CD8-positive, alpha-beta T cell (primary cell): ENCODE measurements at regions of chr21 and their contacts with region 1.

Region 1: GRCh38 chr21:37366482-37367316 is at the start of gene DYRK1A:
- DNase-seq: peak; percentile 97 to 100 (median 98)
- ATAC-seq: peak; percentile 81
- H3K4me3 ChIP-seq: peak within 1 kb of the TSS; percentile 73 to 86
- H3K4me3 Mint-ChIP-seq: peak within 1 kb of the TSS; percentile 100
- H3K27ac ChIP-seq: peak within 1 kb of the TSS; percentile 92 to 94
- H3K27ac Mint-ChIP-seq: peak within 1 kb of the TSS; percentile 100
- H3K4me1 ChIP-seq: peaks cover 36% of the 10 kb centered on the region
- H3K4me1 Mint-ChIP-seq: peaks cover 50% of the 10 kb centered on the region
- H3K27me3 ChIP-seq: no peaks in the 10 kb centered on the region
- H3K27me3 Mint-ChIP-seq: no peaks in the 10 kb centered on the region
- CTCF ChIP-seq: no peak
- total RNA-seq, gene DYRK1A: 171 to 195 TPM

Region 2: GRCh38 chr21:35547946-35548774 is 1818.5 kb before region 1 on chr21:
- CTCF ChIA-PET with region 1: no interaction called
- POLR2A ChIA-PET with region 1: no interaction called
- intact Hi-C with region 1: no loop called
- DNase-seq: no peak
- ATAC-seq: no peak
- H3K4me3 ChIP-seq: no peak overlapping the region
- H3K4me3 Mint-ChIP-seq: no peak overlapping the region
- H3K27ac ChIP-seq: no peak overlapping the region
- H3K27ac Mint-ChIP-seq: no peak overlapping the region
- H3K4me1 ChIP-seq: no peaks in the 10 kb centered on the region
- H3K4me1 Mint-ChIP-seq: no peaks in the 10 kb centered on the region
- H3K27me3 ChIP-seq: no peaks in the 10 kb centered on the region
- H3K27me3 Mint-ChIP-seq: peaks cover 11% of the 10 kb centered on the region
- CTCF ChIP-seq: no peak

Region 3: GRCh38 chr21:37072988-37073416 is 293.7 kb before region 1 on chr21 and contains the starts of genes PIGP and TTC3:
- CTCF ChIA-PET with region 1: no interaction called
- POLR2A ChIA-PET with region 1: interaction called, 3 read pairs
- intact Hi-C with region 1: loop called (anchors 5 kb)
- DNase-seq: peak; percentile 89 to 99 (median 95)
- ATAC-seq: peak; percentile 62
- H3K4me3 ChIP-seq: peak within 1 kb of the TSS; percentile 86 to 94
- H3K4me3 Mint-ChIP-seq: peak within 1 kb of the TSS; percentile 99
- H3K27ac ChIP-seq: peak within 1 kb of the TSS; percentile 96 to 98
- H3K27ac Mint-ChIP-seq: peak within 1 kb of the TSS; percentile 99
- H3K4me1 ChIP-seq: peaks cover 30% of the 10 kb centered on the region
- H3K4me1 Mint-ChIP-seq: peaks cover 57% of the 10 kb centered on the region
- H3K27me3 ChIP-seq: no peaks in the 10 kb centered on the region
- H3K27me3 Mint-ChIP-seq: no peaks in the 10 kb centered on the region
- CTCF ChIP-seq: no peak
- total RNA-seq, gene PIGP: 11.9 to 12.2 TPM
- total RNA-seq, gene TTC3: 137 to 141 TPM

Region 4: DNA sequence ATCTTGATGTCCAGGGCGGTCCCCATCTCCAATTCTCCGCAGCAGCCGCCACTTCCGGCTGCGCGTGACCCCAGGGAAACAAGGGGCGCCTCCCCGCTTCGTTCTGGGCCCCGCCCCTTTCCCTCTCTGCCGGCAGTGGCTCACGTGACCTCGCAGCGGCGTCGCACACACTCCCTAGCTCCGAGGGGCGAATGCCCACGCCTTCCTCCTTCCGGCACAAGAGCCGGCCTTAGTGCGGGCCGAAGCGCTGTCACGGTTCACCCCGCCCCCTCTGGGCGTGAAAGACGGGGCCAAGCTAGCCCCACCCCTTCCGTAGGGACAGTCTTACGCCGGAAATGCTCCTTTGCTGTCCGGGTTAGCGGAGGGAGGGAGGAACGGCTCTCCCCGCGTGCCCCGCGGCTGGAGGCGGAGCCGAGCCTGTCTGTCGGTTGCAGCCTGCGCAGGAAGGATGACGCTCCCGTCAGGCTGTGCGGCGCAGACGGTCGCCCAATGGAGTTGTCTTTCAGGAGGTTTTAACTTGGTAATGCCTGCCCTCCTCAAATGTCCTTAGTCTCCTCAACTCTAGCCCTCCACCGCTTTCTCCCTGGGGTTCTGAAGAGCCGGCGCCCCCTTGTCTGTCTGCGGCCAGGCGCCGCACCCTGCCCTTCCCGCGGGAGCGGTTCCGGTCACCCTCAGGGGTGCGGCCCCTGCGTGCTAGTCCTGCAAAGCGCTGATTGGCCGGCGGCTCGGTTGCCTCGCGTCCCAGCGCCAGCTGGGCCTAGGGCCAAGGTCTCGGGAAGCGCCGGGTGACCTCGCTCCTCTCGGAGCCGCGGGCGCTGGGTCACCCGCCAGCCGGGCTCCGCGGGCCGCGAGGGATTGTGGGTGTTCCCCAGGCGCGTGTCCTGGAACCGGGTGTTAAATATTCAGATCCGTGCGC is 99.2 kb before region 1 on chr21 and contains the start of gene VPS26C:
- CTCF ChIA-PET with region 1: interaction called, 3 read pairs
- POLR2A ChIA-PET with region 1: interaction called, 29 read pairs
- intact Hi-C with region 1: loop called (anchors 1 kb)
- DNase-seq: peak; percentile 96 to 100 (median 98)
- ATAC-seq: peak; percentile 84
- H3K4me3 ChIP-seq: peak within 1 kb of the TSS; percentile 71 to 97
- H3K4me3 Mint-ChIP-seq: peak within 1 kb of the TSS; percentile 96
- H3K27ac ChIP-seq: peak within 1 kb of the TSS; percentile 98 to 100
- H3K27ac Mint-ChIP-seq: peak within 1 kb of the TSS; percentile 98
- H3K4me1 ChIP-seq: peaks cover 20% of the 10 kb centered on the region
- H3K4me1 Mint-ChIP-seq: peaks cover 49% of the 10 kb centered on the region
- H3K27me3 ChIP-seq: no peaks in the 10 kb centered on the region
- H3K27me3 Mint-ChIP-seq: no peaks in the 10 kb centered on the region
- CTCF ChIP-seq: no peak
- total RNA-seq, gene VPS26C: 37.4 to 39.4 TPM

Region 5: GRCh38 chr21:37435120-37435519 is 68.4 kb after region 1 on chr21:
- CTCF ChIA-PET with region 1: no interaction called
- POLR2A ChIA-PET with region 1: no interaction called
- intact Hi-C with region 1: loop called (anchors 1 to 5 kb)
- DNase-seq: peak in 8 of 9 experiments; percentile 12 to 89 (median 44)
- ATAC-seq: peak; percentile 99
- H3K4me3 ChIP-seq: no peak overlapping the region
- H3K4me3 Mint-ChIP-seq: no peak overlapping the region
- H3K27ac ChIP-seq: no peak overlapping the region
- H3K27ac Mint-ChIP-seq: no peak overlapping the region
- H3K4me1 ChIP-seq: peaks cover 67% of the 10 kb centered on the region
- H3K4me1 Mint-ChIP-seq: peaks cover 42% of the 10 kb centered on the region
- H3K27me3 ChIP-seq: no peaks in the 10 kb centered on the region
- H3K27me3 Mint-ChIP-seq: no peaks in the 10 kb centered on the region
- CTCF ChIP-seq: no peak

Region 6: GRCh38 chr21:37563641-37564340 is 197.1 kb after region 1 on chr21:
- CTCF ChIA-PET with region 1: interaction called, 4 read pairs
- POLR2A ChIA-PET with region 1: interaction called, 6 read pairs
- intact Hi-C with region 1: loop called (anchors 1 kb)
- DNase-seq: peak; percentile 82 to 97 (median 91)
- ATAC-seq: peak; percentile 76
- H3K4me3 ChIP-seq: peak overlapping the region; percentile 92 to 96
- H3K4me3 Mint-ChIP-seq: peak overlapping the region; percentile 99
- H3K27ac ChIP-seq: peak overlapping the region; percentile 97 to 99
- H3K27ac Mint-ChIP-seq: peak overlapping the region; percentile 100
- H3K4me1 ChIP-seq: peaks cover 15% of the 10 kb centered on the region
- H3K4me1 Mint-ChIP-seq: peaks cover 17% of the 10 kb centered on the region
- H3K27me3 ChIP-seq: no peaks in the 10 kb centered on the region
- H3K27me3 Mint-ChIP-seq: no peaks in the 10 kb centered on the region
- CTCF ChIP-seq: peak; percentile 63